Heart left ventricle (tissue), 16 donors: ENCODE measurements at regions of chr2 and their contacts with region 1.

Region 1: GRCh38 chr2:236240228-236241038 is 23.8 kb downstream of the ASB18 start:
- DNase-seq: peak in 4 of 5 donors; percentile 60 to 83 (median 68)
- ATAC-seq: peak; percentile 55 to 86 (median 78)
- H3K4me3 ChIP-seq: peak overlapping the region in 9 of 12 donors; percentile 5 to 52 (median 31)
- H3K27ac ChIP-seq: peak overlapping the region; percentile 77 to 96 (median 86)
- H3K4me1 ChIP-seq: peaks cover 0 to 57% (median 11%) of the 10 kb centered on the region in 12 donors
- H3K27me3 ChIP-seq: peaks cover 0 to 41% (median 11%) of the 10 kb centered on the region in 9 donors
- CTCF ChIP-seq: no peak
- POLR2A ChIP-seq: peak in 1 of 2 donors; percentile 42

Region 2: GRCh38 chr2:235820571-235820970 is 419.9 kb before region 1 on chr2:
- intact Hi-C with region 1: no loop called
- DNase-seq: no peak
- ATAC-seq: no peak
- H3K4me3 ChIP-seq: no peak overlapping the region
- H3K27ac ChIP-seq: no peak overlapping the region
- H3K4me1 ChIP-seq: no peaks in the 10 kb centered on the region
- H3K27me3 ChIP-seq: no peaks in the 10 kb centered on the region
- CTCF ChIP-seq: no peak
- POLR2A ChIP-seq: no peak

Region 3: DNA sequence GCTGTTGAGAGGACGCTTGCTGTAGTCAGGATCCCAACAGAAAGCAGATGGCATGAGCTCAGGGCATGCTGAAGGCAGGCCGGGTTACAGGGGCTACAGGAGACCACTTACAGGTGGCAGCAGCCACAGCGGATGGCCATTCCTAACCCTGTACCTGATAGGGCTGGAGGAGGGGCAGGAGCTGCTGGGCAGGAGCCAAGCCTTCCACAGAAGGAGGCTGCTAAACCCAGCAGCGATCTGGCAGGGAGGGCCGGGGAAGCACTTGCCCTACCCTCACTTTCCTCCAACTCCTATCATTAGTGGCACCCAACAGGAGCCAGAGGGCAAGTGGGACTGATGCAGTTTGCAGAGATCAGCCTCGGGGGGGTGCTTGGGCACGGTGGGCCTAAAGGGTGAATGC is 21.8 kb after region 1 on chr2:
- intact Hi-C with region 1: loop called in 2 of 10 experiments (anchors 2 kb)
- DNase-seq: peak in 4 of 5 donors; percentile 39 to 77 (median 45)
- ATAC-seq: peak; percentile 52 to 79 (median 68)
- H3K4me3 ChIP-seq: peak overlapping the region in 11 of 12 donors; percentile 5 to 82 (median 55)
- H3K27ac ChIP-seq: peak overlapping the region in 11 of 12 donors; percentile 51 to 96 (median 79)
- H3K4me1 ChIP-seq: peaks cover 0 to 14% (median 7%) of the 10 kb centered on the region in 12 donors
- H3K27me3 ChIP-seq: peaks cover 0 to 11% (median 0%) of the 10 kb centered on the region in 9 donors
- CTCF ChIP-seq: no peak
- POLR2A ChIP-seq: peak in 1 of 2 donors; percentile 20